Activated T-helper 1 cell treated with anti-CD3 and anti-CD28 coated beads, Interleukin-12 subunit alpha, Interleukin-12 subunit beta, Interleukin-2, Interleukin-4 antibody, amounts not matched to agents 30 ng/mL and 10 ng/mL and 1 ng/mL, durations not matched to agents 14 hours and 24 hours and 36 hours (primary cell): ENCODE measurements at regions of chr1 and their contacts with region 1.

Region 1: DNA sequence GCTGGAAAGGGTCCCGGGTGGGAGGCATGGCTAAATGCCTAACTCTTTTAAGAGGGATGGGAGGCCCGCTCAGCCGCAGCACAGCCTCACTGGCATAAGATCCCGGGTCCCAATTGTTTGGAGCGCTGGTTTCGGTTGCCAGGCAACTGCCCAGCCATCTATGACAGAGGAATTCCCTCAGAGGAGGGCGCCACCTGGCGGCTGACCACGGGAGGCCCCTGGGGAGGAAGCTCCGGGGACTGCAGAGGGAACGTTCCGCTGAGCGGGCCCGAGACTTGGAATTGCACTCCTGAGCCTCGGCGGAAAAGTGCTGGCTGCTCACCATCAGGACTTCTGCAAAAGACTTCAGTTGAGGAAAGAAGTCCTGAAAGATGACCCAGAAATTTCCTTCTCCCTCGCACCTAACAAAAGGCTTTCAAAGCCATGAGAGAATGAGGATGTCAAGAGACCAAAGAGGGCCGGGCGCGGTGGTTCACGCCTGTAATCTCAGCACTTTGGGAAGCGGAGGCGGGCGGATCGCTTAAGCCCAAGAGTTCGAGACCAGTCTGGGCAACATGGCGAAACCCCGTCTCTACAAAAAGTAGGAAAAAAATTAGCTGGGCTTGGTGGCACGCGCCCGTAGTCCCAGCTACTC is 1.1 kb upstream of the ELAPOR1 start:
- DNase-seq: peak; percentile 84
- H3K4me3 Mint-ChIP-seq: peak overlapping the region; percentile 84
- H3K27ac Mint-ChIP-seq: peak overlapping the region; percentile 90
- H3K4me1 Mint-ChIP-seq: peaks cover 42% of the 10 kb centered on the region
- H3K27me3 Mint-ChIP-seq: peaks cover 25% of the 10 kb centered on the region

Region 2: DNA sequence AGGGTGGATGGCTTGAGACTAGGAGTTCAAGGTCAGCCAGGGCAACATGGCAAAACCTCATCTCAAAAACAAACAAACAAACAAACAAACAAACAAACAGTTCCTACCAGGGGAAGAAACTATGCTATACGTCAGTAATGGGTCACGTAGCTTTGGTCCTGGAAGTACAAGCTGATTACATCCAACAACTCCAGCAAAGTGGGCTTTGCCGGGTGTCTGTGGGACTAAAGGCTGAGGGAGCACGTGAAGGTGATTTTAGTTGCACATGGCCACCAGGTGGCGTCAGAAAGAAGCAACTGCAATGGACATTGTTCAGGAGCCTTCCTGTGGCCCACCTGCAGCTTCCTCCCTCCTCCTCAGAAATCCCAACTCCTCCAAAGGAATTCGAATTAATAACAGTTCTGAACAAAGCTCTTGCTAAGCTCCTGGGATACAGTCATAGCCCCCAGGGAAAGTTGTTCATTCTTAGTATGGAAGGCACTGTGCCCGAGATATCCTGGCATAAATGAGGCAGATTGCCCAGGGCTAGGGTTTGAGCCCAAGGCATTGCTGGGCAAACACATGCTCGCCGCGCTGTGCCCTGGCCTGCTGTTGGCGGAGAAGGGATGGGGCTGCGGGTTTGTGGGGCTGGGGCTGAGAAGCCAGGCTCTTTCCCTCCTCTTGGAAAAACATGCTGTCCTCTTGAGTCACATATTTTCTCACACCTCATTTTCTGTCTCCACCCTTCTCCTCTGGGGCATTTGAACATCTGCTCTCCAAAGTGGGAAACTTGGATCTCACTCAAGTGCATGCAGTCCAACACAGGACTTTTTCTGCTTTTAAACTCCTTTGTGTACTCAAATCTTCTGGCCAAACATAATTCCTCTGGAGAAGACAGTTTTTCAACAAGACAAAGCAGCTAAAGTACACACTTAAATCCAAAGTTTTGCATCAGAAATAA is 284.5 kb before region 1 on chr1:
- intact Hi-C with region 1: loop called (anchors 1 kb)
- DNase-seq: peak; percentile 45
- H3K4me3 Mint-ChIP-seq: no peak overlapping the region
- H3K27ac Mint-ChIP-seq: no peak overlapping the region
- H3K4me1 Mint-ChIP-seq: no peaks in the 10 kb centered on the region
- H3K27me3 Mint-ChIP-seq: peaks cover 6% of the 10 kb centered on the region

Region 3: DNA sequence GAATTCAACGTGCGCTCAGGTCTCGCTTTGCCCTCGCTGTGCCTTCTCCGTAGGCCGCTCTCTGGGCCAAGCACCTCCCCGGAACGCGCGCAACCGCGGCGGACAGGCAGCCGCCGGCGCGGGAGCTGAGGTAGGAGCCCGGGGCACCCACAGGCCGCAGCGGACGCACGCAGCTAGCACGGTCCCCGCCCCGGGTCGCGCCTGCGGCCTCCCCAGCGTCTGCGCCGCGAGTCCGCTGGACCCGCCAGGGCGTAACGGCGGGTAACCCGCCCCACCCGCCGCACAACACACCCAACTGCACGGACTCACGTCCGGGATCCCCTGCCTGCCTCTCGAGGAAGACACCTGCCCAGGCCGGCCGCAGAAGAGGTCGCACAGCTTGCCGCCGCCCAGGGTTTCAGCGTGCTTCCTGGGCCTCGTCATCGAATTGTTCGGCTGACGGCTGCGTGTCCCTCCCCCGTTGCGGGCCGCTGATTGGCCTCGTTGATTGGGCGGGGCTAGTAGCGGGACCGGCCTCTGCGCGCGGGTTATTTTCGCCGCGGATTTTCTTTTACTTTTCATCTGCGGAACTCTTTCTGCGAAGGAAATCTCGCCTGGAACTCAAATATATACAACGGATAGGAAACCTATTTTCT is 149.6 kb before region 1 on chr1 and contains the start of gene CLCC1:
- intact Hi-C with region 1: loop called (anchors 1 kb)
- DNase-seq: peak; percentile 93
- H3K4me3 Mint-ChIP-seq: peak within 1 kb of the TSS; percentile 89
- H3K27ac Mint-ChIP-seq: peak within 1 kb of the TSS; percentile 94
- H3K4me1 Mint-ChIP-seq: peaks cover 26% of the 10 kb centered on the region
- H3K27me3 Mint-ChIP-seq: peaks cover 4% of the 10 kb centered on the region
- total RNA-seq, gene CLCC1: 23.1 and 23.4 TPM in 2 replicates

Region 4: GRCh38 chr1:109090196-109091077 is 22.3 kb before region 1 on chr1 and contains the start of gene TMEM167B:
- intact Hi-C with region 1: loop called (anchors 1 kb)
- DNase-seq: peak; percentile 84
- H3K4me3 Mint-ChIP-seq: peak within 1 kb of the TSS; percentile 92
- H3K27ac Mint-ChIP-seq: peak within 1 kb of the TSS; percentile 93
- H3K4me1 Mint-ChIP-seq: peaks cover 21% of the 10 kb centered on the region
- H3K27me3 Mint-ChIP-seq: peaks cover 2% of the 10 kb centered on the region
- total RNA-seq, gene TMEM167B: 26.2 and 27.6 TPM in 2 replicates

Region 5: GRCh38 chr1:109161858-109162606 is 49.3 kb after region 1 on chr1:
- intact Hi-C with region 1: loop called (anchors 1 kb)
- DNase-seq: peak; percentile 52
- H3K4me3 Mint-ChIP-seq: peak overlapping the region; percentile 47
- H3K27ac Mint-ChIP-seq: peak overlapping the region; percentile 71
- H3K4me1 Mint-ChIP-seq: peaks cover 30% of the 10 kb centered on the region
- H3K27me3 Mint-ChIP-seq: peaks cover 2% of the 10 kb centered on the region

Region 6: DNA sequence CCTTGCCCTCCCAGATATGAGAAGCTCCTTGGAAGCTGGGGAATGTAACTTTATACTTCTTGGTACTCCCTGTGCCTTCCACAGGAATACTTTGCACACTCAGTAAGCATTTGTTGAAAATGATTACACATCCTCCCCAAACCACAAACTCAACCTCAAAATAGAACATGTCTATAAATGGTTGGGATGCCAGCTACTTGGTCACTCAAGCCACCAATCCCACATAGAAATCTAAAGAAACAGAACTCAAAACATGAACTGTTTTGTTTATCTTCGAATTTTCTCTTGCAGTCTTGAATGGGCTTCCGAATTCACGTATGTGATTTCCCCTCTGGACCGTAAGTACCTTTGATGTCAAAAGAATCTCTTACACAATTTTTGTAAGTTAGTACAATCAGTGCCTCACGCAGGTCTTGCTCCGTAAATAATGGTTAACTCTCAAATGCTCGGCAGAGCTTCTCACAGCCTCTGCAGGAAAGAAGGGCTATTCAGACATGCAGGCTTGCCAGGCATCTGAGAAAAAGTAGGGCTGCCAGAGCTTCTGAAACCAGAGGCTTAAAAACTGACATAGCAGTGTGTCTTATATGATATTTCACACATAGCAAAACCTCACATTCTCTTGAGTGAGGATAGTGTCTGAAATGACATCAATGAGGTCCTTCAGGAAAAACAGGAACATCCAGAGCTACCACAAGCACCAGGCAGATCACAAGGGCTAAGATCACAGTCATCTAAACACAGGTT is 258.1 kb after region 1 on chr1:
- intact Hi-C with region 1: loop called (anchors 1 kb)
- DNase-seq: peak; percentile 1
- H3K4me3 Mint-ChIP-seq: peak overlapping the region; percentile 13
- H3K27ac Mint-ChIP-seq: peak overlapping the region; percentile 79
- H3K4me1 Mint-ChIP-seq: peaks cover 50% of the 10 kb centered on the region
- H3K27me3 Mint-ChIP-seq: peaks cover 12% of the 10 kb centered on the region

Region 7: DNA sequence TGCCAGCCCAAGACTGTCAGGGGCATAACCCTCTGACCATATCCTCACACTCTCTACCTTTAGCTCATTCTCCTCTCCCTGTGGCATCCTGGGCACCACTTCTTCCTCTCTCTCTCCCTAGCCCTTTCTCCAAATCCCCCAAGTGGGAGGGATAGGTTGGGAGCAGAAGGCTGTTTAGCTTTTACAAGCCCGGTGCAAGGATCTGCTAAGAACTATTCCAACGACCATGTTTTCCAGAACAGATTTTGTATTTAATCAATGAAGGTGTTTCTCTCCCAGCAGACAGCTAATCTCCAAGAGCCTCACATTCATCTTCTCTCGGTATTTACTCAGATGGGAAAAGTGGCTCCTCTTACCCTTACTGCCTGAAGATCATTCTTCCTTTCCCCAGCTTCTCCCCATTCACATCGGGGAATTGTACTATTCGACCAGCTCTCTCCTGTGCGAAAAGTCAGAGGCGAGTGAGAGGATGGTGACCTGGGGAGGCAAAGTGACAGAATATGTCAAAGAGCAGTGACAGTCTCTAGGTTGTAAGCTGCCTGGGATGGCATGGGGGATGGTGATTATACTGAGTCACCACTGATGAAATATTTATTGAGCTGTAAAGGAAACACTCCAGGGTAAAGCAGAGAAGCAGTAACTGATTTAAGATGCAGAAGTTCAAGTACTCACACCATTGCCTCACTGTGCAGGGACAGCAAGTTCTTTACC is 1179.4 kb after region 1 on chr1:
- intact Hi-C with region 1: no loop called
- DNase-seq: no peak
- H3K4me3 Mint-ChIP-seq: no peak overlapping the region
- H3K27ac Mint-ChIP-seq: no peak overlapping the region
- H3K4me1 Mint-ChIP-seq: no peaks in the 10 kb centered on the region
- H3K27me3 Mint-ChIP-seq: peaks cover 9% of the 10 kb centered on the region

Region 8: DNA sequence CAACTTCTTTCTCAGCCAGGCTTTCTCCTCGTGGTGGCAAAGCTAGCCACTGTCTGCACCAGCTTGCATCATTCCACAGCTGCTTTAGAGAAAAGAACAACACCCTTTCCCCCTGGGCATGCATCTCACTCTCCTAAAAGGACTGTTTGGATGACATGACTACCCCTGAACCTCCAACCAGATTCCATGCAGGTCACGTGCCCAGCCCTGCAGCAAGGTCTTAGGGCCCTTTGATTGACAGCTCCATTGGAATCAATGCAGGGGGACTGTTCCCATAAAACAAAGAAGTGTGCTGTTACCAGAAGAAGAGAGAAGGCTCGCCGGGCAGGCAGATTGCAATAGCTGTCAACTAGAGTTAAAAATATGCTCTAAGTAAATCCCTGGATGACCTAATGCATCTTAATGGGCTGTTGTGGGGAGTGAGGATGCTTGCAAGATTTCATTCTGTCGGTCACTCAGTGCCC is 1468.9 kb after region 1 on chr1:
- intact Hi-C with region 1: no loop called
- DNase-seq: no peak
- H3K4me3 Mint-ChIP-seq: no peak overlapping the region
- H3K27ac Mint-ChIP-seq: no peak overlapping the region
- H3K4me1 Mint-ChIP-seq: no peaks in the 10 kb centered on the region
- H3K27me3 Mint-ChIP-seq: peaks cover 25% of the 10 kb centered on the region